OCI-LY7 (cell line): ENCODE measurements at regions of chr1 and their contacts with region 1.

Region 1: DNA sequence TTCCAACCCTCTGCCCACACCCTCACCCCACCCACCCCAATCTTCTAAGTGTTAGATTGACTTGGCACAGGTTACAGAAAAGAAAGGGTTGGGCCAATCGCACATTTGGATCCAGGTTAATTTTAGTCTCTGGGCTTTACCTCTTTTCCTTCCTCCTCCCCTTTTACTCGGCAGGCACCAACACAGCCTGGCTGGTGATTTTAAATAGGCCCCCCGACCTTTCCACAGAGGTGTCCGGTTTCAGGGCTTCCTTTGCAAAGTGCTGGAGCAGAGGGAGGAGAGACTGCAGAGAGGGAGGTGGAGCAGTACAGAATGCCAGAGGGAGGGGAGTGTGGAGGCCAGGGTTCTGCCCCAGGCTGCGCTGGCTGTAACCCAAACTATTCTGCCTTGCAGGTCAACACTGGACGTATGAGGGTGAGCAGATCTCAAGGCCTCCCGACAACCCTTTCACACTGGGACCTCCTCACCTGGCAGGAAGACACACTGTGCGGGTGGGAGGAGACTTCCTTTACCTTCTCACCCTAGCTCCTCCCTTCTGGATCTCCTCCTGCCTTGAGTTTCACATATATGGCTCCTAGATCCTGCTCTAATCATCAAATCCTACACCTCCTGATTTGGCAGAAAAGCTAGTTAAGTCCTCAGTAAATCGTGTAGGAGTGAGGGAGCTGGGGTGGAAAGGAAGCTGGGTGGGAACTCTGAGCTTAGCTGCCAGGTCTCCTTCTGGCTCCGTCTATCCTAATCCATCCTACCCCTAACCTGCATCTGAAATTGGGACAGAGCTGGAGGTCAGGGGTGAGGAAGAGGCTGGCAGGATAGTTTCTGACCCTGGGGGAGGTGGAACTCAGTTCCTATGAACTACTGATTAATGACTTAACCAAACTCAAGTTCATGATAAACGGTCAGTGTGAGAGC is 2.4 kb downstream of the CA14 start:
- DNase-seq: no peak
- H3K4me3 ChIP-seq: no peak overlapping the region
- H3K27ac ChIP-seq: no peak overlapping the region
- H3K4me1 ChIP-seq: peaks cover 24% of the 10 kb centered on the region
- CTCF ChIP-seq: no peak

Region 2: GRCh38 chr1:150281837-150282653 is 22.0 kb after region 1 on chr1 and contains the start of gene CIART:
- CTCF ChIA-PET with region 1: interaction called, 4 read pairs
- POLR2A ChIA-PET with region 1: interaction called, 4 read pairs
- intact Hi-C with region 1: loop called (anchors 1 kb)
- DNase-seq: no peak
- H3K4me3 ChIP-seq: no peak within 1 kb of the TSS
- H3K27ac ChIP-seq: no peak within 1 kb of the TSS
- H3K4me1 ChIP-seq: peaks cover 7% of the 10 kb centered on the region
- CTCF ChIP-seq: no peak
- total RNA-seq, gene CIART: not detected in 2 replicates

Region 3: DNA sequence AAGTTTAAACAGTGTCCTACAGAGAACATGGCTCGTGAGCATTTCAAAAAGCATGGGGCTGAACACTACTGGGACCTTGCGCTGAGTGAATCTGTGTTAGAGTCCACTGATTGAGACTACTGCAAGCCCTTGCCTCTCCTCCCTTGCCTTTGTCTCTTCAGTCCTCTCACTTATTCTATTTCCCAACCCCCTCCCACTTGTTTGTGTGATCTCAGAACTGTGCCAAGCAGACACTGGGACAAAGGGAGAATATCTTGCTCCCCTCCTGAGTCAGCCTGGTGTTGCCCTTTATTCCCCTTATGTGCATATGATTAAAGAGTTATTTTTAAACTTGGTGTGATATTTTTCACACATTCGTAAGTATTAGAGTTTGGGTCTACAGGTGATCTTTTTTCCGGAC is 92.9 kb after region 1 on chr1:
- CTCF ChIA-PET with region 1: no interaction called
- POLR2A ChIA-PET with region 1: no interaction called
- intact Hi-C with region 1: no loop called
- DNase-seq: no peak
- H3K4me3 ChIP-seq: no peak overlapping the region
- H3K27ac ChIP-seq: no peak overlapping the region
- H3K4me1 ChIP-seq: no peaks in the 10 kb centered on the region
- CTCF ChIP-seq: no peak

Region 4: GRCh38 chr1:150529017-150529416 is 269.0 kb after region 1 on chr1:
- CTCF ChIA-PET with region 1: no interaction called
- POLR2A ChIA-PET with region 1: no interaction called
- intact Hi-C with region 1: loop called (anchors 10 kb)
- DNase-seq: no peak
- H3K4me3 ChIP-seq: no peak overlapping the region
- H3K27ac ChIP-seq: no peak overlapping the region
- H3K4me1 ChIP-seq: no peaks in the 10 kb centered on the region
- CTCF ChIP-seq: no peak